Mammary epithelial cell (primary cell): ENCODE measurements at regions of chr18 and their contacts with region 1.

Region 1: GRCh38 chr18:31429621-31430020 is 17.9 kb upstream of the DSG3 start:
- DNase-seq: peak; percentile 70
- H3K4me3 ChIP-seq: no peak overlapping the region
- H3K27ac ChIP-seq: peak overlapping the region; percentile 56
- H3K4me1 ChIP-seq: peaks cover 30% of the 10 kb centered on the region
- H3K27me3 ChIP-seq: no peaks in the 10 kb centered on the region
- CTCF ChIP-seq: no peak

Region 2: GRCh38 chr18:31274915-31275314 is 154.7 kb before region 1 on chr18:
- CTCF ChIA-PET with region 1: no interaction called
- dilution Hi-C with region 1: no loop called
- in situ Hi-C with region 1: loop called in 1 of 2 experiments (anchors 25 kb)
- intact Hi-C with region 1: no loop called
- DNase-seq: peak; percentile 93
- H3K4me3 ChIP-seq: peak overlapping the region in 1 of 3 experiments; percentile 16
- H3K27ac ChIP-seq: peak overlapping the region; percentile 91
- H3K4me1 ChIP-seq: peaks cover 22% of the 10 kb centered on the region
- H3K27me3 ChIP-seq: no peaks in the 10 kb centered on the region
- CTCF ChIP-seq: no peak

Region 3: DNA sequence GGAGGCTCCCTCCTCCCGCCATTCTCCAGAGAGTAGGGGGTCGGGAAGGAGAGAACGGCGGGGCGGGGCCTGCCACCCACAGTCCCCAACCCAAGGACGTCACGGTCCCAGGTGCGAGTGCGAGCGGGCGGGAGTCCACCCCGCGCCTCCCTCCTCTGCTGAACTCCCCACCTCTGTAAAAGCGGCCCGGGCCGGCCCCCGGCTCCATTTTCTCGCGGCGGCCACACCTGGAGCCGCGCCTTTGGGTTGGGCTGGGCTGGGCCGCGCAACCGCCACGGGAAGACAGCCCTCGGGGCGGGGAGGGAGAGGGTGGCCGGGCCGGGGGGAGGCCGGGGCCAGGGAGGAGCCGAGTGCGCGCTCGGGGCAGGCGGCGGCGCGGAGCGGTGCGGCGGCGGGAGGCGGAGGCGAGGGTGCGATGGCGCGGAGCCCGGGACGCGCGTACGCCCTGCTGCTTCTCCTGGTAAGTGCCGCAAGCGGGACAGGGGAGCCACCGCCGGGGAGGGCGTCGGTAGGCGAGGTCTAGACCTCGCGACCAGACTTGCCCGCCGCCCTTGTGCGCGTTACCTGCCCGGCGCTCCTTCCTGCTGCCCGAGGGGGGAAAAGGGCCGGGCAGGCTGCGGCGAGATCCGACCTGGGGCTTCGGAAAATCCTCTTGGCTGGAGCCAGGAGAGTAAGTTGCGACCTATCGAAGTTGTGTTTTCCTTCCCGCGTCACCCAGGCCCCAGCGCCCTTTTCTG is 68.4 kb after region 1 on chr18 and contains the start of gene DSG2:
- CTCF ChIA-PET with region 1: no interaction called
- dilution Hi-C with region 1: no loop called
- in situ Hi-C with region 1: no loop called
- intact Hi-C with region 1: no loop called
- DNase-seq: peak; percentile 87
- H3K4me3 ChIP-seq: peak within 1 kb of the TSS; percentile 72 to 77 (median 73)
- H3K27ac ChIP-seq: peak within 1 kb of the TSS; percentile 93
- H3K4me1 ChIP-seq: peaks cover 19% of the 10 kb centered on the region
- H3K27me3 ChIP-seq: no peaks in the 10 kb centered on the region
- CTCF ChIP-seq: no peak
- total RNA-seq, gene DSG2: 110 to 150 TPM

Region 4: GRCh38 chr18:31512203-31512764 is 82.7 kb after region 1 on chr18:
- CTCF ChIA-PET with region 1: interaction called, 36 read pairs
- dilution Hi-C with region 1: no loop called
- in situ Hi-C with region 1: no loop called
- intact Hi-C with region 1: no loop called
- DNase-seq: peak; percentile 91
- H3K4me3 ChIP-seq: no peak overlapping the region
- H3K27ac ChIP-seq: peak overlapping the region; percentile 82
- H3K4me1 ChIP-seq: peaks cover 56% of the 10 kb centered on the region
- H3K27me3 ChIP-seq: no peaks in the 10 kb centered on the region
- CTCF ChIP-seq: no peak